ENCODE measurements at regions of chr11 and their contacts with region 1.

Region 1: DNA sequence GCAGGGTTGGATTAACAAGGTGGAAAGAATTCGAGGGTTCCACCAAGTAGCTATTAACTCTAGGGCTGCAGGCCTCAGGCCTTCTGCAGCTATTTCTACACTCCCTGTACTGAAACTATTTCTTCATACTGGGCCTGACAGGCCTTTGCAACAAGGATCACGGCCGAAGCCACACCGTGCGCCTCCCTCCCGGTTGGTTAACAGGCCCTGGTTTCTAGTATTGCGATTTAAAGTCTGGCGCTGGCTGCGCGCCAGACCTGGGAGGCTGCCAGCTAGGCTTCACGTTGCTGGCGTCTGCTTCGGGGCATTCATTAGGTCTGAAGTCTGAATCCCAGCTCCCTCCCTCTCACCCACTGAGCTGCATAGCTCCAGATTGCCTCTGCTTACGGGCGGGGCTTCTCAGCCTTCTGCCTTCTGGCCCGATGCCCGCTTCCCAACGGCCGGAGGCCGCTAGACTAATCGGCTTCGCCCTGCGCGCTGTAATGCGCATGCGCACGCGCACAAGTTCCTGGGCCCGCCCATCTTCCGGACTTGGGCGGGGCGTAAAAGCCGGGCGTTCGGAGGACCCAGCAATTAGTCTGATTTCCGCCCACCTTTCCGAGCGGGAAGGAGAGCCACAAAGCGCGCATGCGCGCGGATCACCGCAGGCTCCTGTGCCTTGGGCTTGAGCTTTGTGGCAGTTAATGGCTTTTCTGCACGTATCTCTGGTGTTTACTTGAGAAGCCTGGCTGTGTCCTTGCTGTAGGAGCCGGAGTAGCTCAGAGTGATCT is 1.6 kb downstream of the LDHA start:
- DNase-seq: peak; percentile 99
- ATAC-seq: peak; percentile 86
- H3K4me3 ChIP-seq: peak overlapping the region; percentile 91
- H3K27ac ChIP-seq: peak overlapping the region; percentile 95
- H3K4me1 ChIP-seq: peaks cover 6% of the 10 kb centered on the region
- H3K27me3 ChIP-seq: no peaks in the 10 kb centered on the region
- CTCF ChIP-seq: no peak
- POLR2A ChIP-seq: peak; percentile 72
- RAD21 ChIP-seq: peak; percentile 10; the same call in 1 of the 2 replicates

Region 2: DNA sequence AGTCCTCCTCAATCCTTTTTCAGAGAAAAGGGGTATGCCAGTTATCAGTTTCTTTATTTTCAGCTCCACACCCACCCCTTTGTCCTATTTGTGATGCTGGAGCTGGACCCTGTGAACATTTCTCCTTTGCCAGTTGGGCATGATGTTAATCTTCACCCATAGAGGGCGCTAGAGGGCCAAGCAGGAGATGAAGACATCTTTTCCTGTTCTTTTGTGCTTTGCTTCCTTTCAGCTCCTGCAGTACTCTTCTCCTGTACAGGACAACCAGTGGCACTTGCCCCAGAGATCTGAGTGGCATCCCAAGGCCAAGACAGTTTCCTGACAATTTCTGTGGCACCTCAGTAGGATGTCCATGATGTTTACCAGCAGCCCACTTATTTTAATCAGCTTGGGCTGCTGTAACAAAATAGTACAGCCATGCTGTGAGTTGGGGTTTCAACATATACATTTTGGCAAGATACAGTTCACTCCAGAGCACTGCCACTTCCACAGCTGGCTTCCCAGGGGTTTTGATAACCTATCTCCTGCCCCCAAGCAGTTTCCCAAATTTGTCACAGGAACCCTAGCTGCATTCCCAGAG is 152.0 kb before region 1 on chr11:
- CTCF ChIA-PET with region 1: interaction called, 3 read pairs
- POLR2A ChIA-PET with region 1: no interaction called
- dilution Hi-C with region 1: no loop called
- in situ Hi-C with region 1: no loop called
- intact Hi-C with region 1: loop called (anchors 5 kb)
- DNase-seq: peak; percentile 72
- ATAC-seq: peak; percentile 81
- H3K4me3 ChIP-seq: no peak overlapping the region
- H3K27ac ChIP-seq: no peak overlapping the region
- H3K4me1 ChIP-seq: no peaks in the 10 kb centered on the region
- H3K27me3 ChIP-seq: peaks cover 6% of the 10 kb centered on the region
- CTCF ChIP-seq: peak; percentile 83
- POLR2A ChIP-seq: no peak
- RAD21 ChIP-seq: peak; percentile 80

Region 3: GRCh38 chr11:18321980-18322711 is 73.8 kb before region 1 on chr11 and contains the starts of genes GTF2H1 and HPS5:
- CTCF ChIA-PET with region 1: interaction called, 3 read pairs
- POLR2A ChIA-PET with region 1: interaction called, 5 read pairs
- dilution Hi-C with region 1: no loop called
- in situ Hi-C with region 1: no loop called
- intact Hi-C with region 1: loop called (anchors 2 kb)
- DNase-seq: peak; percentile 99
- ATAC-seq: peak; percentile 94
- H3K4me3 ChIP-seq: peak within 1 kb of the TSS; percentile 77
- H3K27ac ChIP-seq: peak within 1 kb of the TSS; percentile 98
- H3K4me1 ChIP-seq: peaks cover 4% of the 10 kb centered on the region
- H3K27me3 ChIP-seq: no peaks in the 10 kb centered on the region
- CTCF ChIP-seq: no peak
- POLR2A ChIP-seq: peak; percentile 97
- RAD21 ChIP-seq: no peak
- total RNA-seq, gene GTF2H1: 67.0 and 72.8 TPM in 2 replicates
- total RNA-seq, gene HPS5: 28.3 and 34.7 TPM in 2 replicates

Region 4: GRCh38 chr11:18347471-18348125 is 48.3 kb before region 1 on chr11:
- CTCF ChIA-PET with region 1: no interaction called
- POLR2A ChIA-PET with region 1: no interaction called
- dilution Hi-C with region 1: no loop called
- in situ Hi-C with region 1: no loop called
- intact Hi-C with region 1: loop called (anchors 5 kb)
- DNase-seq: peak; percentile 92
- ATAC-seq: peak; percentile 96
- H3K4me3 ChIP-seq: no peak overlapping the region
- H3K27ac ChIP-seq: peak overlapping the region; percentile 29; the same call in 1 of the 2 replicates
- H3K4me1 ChIP-seq: no peaks in the 10 kb centered on the region; the same call in 1 of the 2 replicates
- H3K27me3 ChIP-seq: no peaks in the 10 kb centered on the region
- CTCF ChIP-seq: no peak
- POLR2A ChIP-seq: no peak
- RAD21 ChIP-seq: no peak

Region 5: GRCh38 chr11:18383388-18384156 is 12.3 kb before region 1 on chr11:
- CTCF ChIA-PET with region 1: interaction called, 4 read pairs
- POLR2A ChIA-PET with region 1: interaction called, 28 read pairs
- dilution Hi-C with region 1: no loop called
- in situ Hi-C with region 1: no loop called
- intact Hi-C with region 1: loop called (anchors 1 kb)
- DNase-seq: peak; percentile 96
- ATAC-seq: peak; percentile 93
- H3K4me3 ChIP-seq: no peak overlapping the region
- H3K27ac ChIP-seq: peak overlapping the region; percentile 88
- H3K4me1 ChIP-seq: peaks cover 19% of the 10 kb centered on the region
- H3K27me3 ChIP-seq: no peaks in the 10 kb centered on the region
- CTCF ChIP-seq: no peak
- POLR2A ChIP-seq: no peak; the same call in 1 of the 2 replicates
- RAD21 ChIP-seq: no peak

Region 6: GRCh38 chr11:18634140-18635032 is 238.5 kb after region 1 on chr11 and contains the start of gene SPTY2D1:
- CTCF ChIA-PET with region 1: no interaction called
- POLR2A ChIA-PET with region 1: interaction called, 4 read pairs
- dilution Hi-C with region 1: no loop called
- in situ Hi-C with region 1: no loop called
- intact Hi-C with region 1: loop called (anchors 10 kb)
- DNase-seq: peak; percentile 99
- ATAC-seq: peak; percentile 97
- H3K4me3 ChIP-seq: peak within 1 kb of the TSS; percentile 60
- H3K27ac ChIP-seq: peak within 1 kb of the TSS; percentile 90
- H3K4me1 ChIP-seq: no peaks in the 10 kb centered on the region
- H3K27me3 ChIP-seq: no peaks in the 10 kb centered on the region
- CTCF ChIP-seq: no peak
- POLR2A ChIP-seq: peak; percentile 98
- RAD21 ChIP-seq: 0 out of 2 replicates have a peak, but pooled peaks have one; percentile 4
- total RNA-seq, gene SPTY2D1: 35.8 and 36.6 TPM in 2 replicates

Measured in IMR-90 (cell line).